Activated T-helper 1 cell treated with anti-CD3 and anti-CD28 coated beads, Interleukin-12 subunit alpha, Interleukin-12 subunit beta, Interleukin-2, Interleukin-4 antibody, amounts not matched to agents 30 ng/mL and 10 ng/mL and 1 ng/mL, durations not matched to agents 14 hours and 24 hours and 36 hours (primary cell): ENCODE measurements at regions of chr16 and their contacts with region 1.

Region 1: GRCh38 chr16:29926005-29926710 is at the start of gene KCTD13:
- DNase-seq: peak; percentile 93
- H3K4me3 Mint-ChIP-seq: peak within 1 kb of the TSS; percentile 94
- H3K27ac Mint-ChIP-seq: peak within 1 kb of the TSS; percentile 95
- H3K4me1 Mint-ChIP-seq: peaks cover 31% of the 10 kb centered on the region
- H3K27me3 Mint-ChIP-seq: no peaks in the 10 kb centered on the region
- total RNA-seq, gene KCTD13: 53.7 and 58.2 TPM in 2 replicates

Region 2: GRCh38 chr16:29790183-29790952 is 135.8 kb before region 1 on chr16 and contains the start of gene KIF22:
- intact Hi-C with region 1: loop called (anchors 1 kb)
- DNase-seq: peak; percentile 100
- H3K4me3 Mint-ChIP-seq: peak within 1 kb of the TSS; percentile 99
- H3K27ac Mint-ChIP-seq: peak within 1 kb of the TSS; percentile 97
- H3K4me1 Mint-ChIP-seq: peaks cover 44% of the 10 kb centered on the region
- H3K27me3 Mint-ChIP-seq: no peaks in the 10 kb centered on the region
- total RNA-seq, gene KIF22: 134 and 140 TPM in 2 replicates

Region 3: GRCh38 chr16:29877266-29877961 is 48.7 kb before region 1 on chr16:
- intact Hi-C with region 1: loop called (anchors 1 kb)
- DNase-seq: peak; percentile 59
- H3K4me3 Mint-ChIP-seq: peak overlapping the region; percentile 46
- H3K27ac Mint-ChIP-seq: no peak overlapping the region
- H3K4me1 Mint-ChIP-seq: peaks cover 14% of the 10 kb centered on the region
- H3K27me3 Mint-ChIP-seq: peaks cover 28% of the 10 kb centered on the region

Region 4: GRCh38 chr16:29943846-29944669 is 17.9 kb after region 1 on chr16:
- intact Hi-C with region 1: no loop called
- DNase-seq: no peak
- H3K4me3 Mint-ChIP-seq: no peak overlapping the region
- H3K27ac Mint-ChIP-seq: no peak overlapping the region
- H3K4me1 Mint-ChIP-seq: no peaks in the 10 kb centered on the region
- H3K27me3 Mint-ChIP-seq: peaks cover 29% of the 10 kb centered on the region

Region 5: DNA sequence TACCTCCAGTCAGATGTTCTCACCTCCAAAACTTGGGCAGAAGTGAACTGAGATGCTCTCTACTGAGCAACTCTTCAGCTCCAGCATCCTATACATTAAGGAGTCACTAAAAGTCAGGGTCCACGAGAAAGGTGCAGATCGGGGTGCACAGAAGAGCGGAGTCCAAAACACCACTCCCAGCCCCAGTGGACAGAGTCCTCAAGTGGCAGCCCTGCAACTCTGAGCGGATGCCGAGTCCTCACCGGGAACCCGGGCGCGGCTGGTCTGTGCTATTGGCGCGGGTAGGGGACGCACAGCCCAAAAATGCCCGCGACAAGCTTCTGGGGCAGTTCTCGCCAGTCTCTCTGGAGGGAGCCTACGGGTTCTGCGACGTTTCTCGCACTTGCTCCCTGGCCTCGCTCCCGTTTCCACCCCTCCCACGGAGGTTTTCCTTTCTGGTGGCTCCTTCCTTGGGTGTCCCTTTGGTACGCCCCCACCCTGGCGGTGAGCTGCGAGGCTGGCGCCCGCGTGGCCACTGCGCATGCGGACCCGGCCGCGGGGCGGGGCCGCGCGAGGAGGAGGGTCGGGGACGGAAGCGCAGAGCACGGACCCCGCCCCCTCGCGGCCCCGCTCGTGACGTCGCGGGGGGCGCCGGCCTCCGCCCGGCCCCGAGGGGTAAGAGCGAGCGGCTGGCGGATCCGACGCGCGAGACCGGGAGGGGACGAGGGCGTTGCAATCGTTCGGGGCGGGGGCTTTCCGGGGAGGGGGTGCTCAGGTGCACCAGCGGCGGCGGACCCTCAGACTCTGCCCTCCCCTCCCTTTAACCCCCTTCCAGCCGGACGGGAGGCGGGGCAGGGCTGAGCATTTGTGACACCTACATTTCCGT is 35.6 kb after region 1 on chr16 and contains the start of gene TMEM219:
- intact Hi-C with region 1: loop called (anchors 1 kb)
- DNase-seq: peak; percentile 95
- H3K4me3 Mint-ChIP-seq: peak within 1 kb of the TSS; percentile 86
- H3K27ac Mint-ChIP-seq: peak within 1 kb of the TSS; percentile 83
- H3K4me1 Mint-ChIP-seq: peaks cover 24% of the 10 kb centered on the region
- H3K27me3 Mint-ChIP-seq: no peaks in the 10 kb centered on the region
- total RNA-seq, gene TMEM219: 41.5 and 43.7 TPM in 2 replicates

Region 6: GRCh38 chr16:29995911-29996772 is 70.0 kb after region 1 on chr16 and contains the start of gene INO80E:
- intact Hi-C with region 1: loop called (anchors 1 kb)
- DNase-seq: peak; percentile 99
- H3K4me3 Mint-ChIP-seq: peak within 1 kb of the TSS; percentile 98
- H3K27ac Mint-ChIP-seq: peak within 1 kb of the TSS; percentile 96
- H3K4me1 Mint-ChIP-seq: peaks cover 39% of the 10 kb centered on the region
- H3K27me3 Mint-ChIP-seq: no peaks in the 10 kb centered on the region
- total RNA-seq, gene INO80E: 128 and 137 TPM in 2 replicates

Region 7: GRCh38 chr16:30032083-30032819 is 106.1 kb after region 1 on chr16:
- intact Hi-C with region 1: no loop called
- DNase-seq: peak; percentile 61
- H3K4me3 Mint-ChIP-seq: no peak overlapping the region
- H3K27ac Mint-ChIP-seq: no peak overlapping the region
- H3K4me1 Mint-ChIP-seq: peaks cover 16% of the 10 kb centered on the region
- H3K27me3 Mint-ChIP-seq: peaks cover 48% of the 10 kb centered on the region

Region 8: GRCh38 chr16:31201582-31202413 is 1275.6 kb after region 1 on chr16:
- intact Hi-C with region 1: no loop called
- DNase-seq: peak; percentile 37
- H3K4me3 Mint-ChIP-seq: peak overlapping the region; percentile 85
- H3K27ac Mint-ChIP-seq: peak overlapping the region; percentile 80
- H3K4me1 Mint-ChIP-seq: peaks cover 55% of the 10 kb centered on the region
- H3K27me3 Mint-ChIP-seq: peaks cover 4% of the 10 kb centered on the region